Activated T-helper 1 cell treated with anti-CD3 and anti-CD28 coated beads, Interleukin-12 subunit alpha, Interleukin-12 subunit beta, Interleukin-2, Interleukin-4 antibody, amounts not matched to agents 30 ng/mL and 10 ng/mL and 1 ng/mL, durations not matched to agents 14 hours and 24 hours and 36 hours (primary cell): ENCODE measurements at regions of chr3 and their contacts with region 1.

Region 1: GRCh38 chr3:14780927-14781507 is 37.7 kb upstream of the FGD5 start:
- DNase-seq: no peak
- H3K4me3 Mint-ChIP-seq: no peak overlapping the region
- H3K27ac Mint-ChIP-seq: no peak overlapping the region
- H3K4me1 Mint-ChIP-seq: no peaks in the 10 kb centered on the region
- H3K27me3 Mint-ChIP-seq: peaks cover 21% of the 10 kb centered on the region

Region 2: GRCh38 chr3:13507769-13508339 is 1273.2 kb before region 1 on chr3:
- intact Hi-C with region 1: no loop called
- DNase-seq: no peak
- H3K4me3 Mint-ChIP-seq: no peak overlapping the region
- H3K27ac Mint-ChIP-seq: no peak overlapping the region
- H3K4me1 Mint-ChIP-seq: no peaks in the 10 kb centered on the region
- H3K27me3 Mint-ChIP-seq: peaks cover 3% of the 10 kb centered on the region

Region 3: GRCh38 chr3:14508961-14509795 is 271.8 kb before region 1 on chr3:
- intact Hi-C with region 1: loop called (anchors 5 kb)
- DNase-seq: peak; percentile 53
- H3K4me3 Mint-ChIP-seq: no peak overlapping the region
- H3K27ac Mint-ChIP-seq: no peak overlapping the region
- H3K4me1 Mint-ChIP-seq: no peaks in the 10 kb centered on the region
- H3K27me3 Mint-ChIP-seq: no peaks in the 10 kb centered on the region

Region 4: DNA sequence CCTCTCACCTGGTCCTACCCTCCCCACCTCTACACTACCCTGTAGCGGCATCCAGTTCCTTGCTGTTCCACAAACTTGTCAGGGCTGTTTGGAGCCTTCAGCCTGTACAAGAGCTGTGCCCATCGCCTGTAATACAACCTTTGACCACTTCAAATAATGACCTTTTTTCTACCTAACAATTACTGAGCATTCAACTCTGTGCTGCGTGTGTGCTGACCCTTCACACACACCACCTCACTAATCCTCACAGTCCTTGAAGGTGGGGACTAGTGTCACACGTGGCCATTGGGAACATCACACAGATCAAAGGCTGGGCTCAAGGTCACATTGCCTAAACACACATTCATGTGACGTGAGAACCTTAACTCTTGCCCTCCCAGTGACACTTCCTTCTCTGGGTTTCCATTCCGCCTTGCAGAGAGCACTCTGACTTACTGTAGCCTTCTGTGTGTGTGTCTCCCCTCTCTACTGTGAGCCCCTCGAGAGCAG is 103.0 kb before region 1 on chr3:
- intact Hi-C with region 1: loop called (anchors 1 kb)
- DNase-seq: no peak
- H3K4me3 Mint-ChIP-seq: no peak overlapping the region
- H3K27ac Mint-ChIP-seq: no peak overlapping the region
- H3K4me1 Mint-ChIP-seq: no peaks in the 10 kb centered on the region
- H3K27me3 Mint-ChIP-seq: no peaks in the 10 kb centered on the region

Region 5: DNA sequence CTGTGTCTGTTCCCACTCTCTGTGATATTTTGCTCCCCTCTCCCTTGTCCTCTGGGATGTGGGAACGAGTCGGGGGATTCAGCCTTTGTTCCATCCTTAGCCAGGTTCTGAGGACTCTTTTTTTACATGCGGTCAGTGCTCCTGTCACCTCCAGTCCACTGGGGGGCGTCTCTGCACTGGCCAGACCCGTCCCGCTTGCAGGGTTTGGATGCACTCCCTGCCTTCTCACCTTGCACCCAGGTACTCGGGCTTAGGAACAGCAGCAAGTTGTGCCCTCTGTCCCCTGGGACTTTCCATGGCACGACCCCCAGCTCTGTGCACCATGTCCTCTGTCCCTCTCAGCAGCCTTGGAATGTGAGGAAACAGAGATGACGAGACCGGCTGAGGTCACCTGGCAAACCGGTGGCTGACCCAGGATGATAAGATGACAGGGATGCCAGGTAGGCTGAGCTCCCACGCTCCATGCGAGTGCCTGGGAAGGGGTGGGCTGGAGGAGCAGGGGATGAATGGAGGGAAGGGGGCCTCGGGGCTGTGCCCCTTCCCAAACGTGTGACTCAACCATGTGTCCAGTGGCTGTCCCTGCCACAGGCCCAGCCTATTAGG is 10.4 kb after region 1 on chr3:
- intact Hi-C with region 1: no loop called
- DNase-seq: peak; percentile 40
- H3K4me3 Mint-ChIP-seq: no peak overlapping the region
- H3K27ac Mint-ChIP-seq: no peak overlapping the region
- H3K4me1 Mint-ChIP-seq: no peaks in the 10 kb centered on the region
- H3K27me3 Mint-ChIP-seq: peaks cover 9% of the 10 kb centered on the region